AG04449 (cell line): ENCODE measurements at regions of chr15 and their contacts with region 1.

Region 1: GRCh38 chr15:34708422-34708821 is 46.4 kb downstream of the GJD2 start:
- DNase-seq: no peak
- H3K4me3 ChIP-seq: no peak overlapping the region
- CTCF ChIP-seq: peak; percentile 77

Region 2: DNA sequence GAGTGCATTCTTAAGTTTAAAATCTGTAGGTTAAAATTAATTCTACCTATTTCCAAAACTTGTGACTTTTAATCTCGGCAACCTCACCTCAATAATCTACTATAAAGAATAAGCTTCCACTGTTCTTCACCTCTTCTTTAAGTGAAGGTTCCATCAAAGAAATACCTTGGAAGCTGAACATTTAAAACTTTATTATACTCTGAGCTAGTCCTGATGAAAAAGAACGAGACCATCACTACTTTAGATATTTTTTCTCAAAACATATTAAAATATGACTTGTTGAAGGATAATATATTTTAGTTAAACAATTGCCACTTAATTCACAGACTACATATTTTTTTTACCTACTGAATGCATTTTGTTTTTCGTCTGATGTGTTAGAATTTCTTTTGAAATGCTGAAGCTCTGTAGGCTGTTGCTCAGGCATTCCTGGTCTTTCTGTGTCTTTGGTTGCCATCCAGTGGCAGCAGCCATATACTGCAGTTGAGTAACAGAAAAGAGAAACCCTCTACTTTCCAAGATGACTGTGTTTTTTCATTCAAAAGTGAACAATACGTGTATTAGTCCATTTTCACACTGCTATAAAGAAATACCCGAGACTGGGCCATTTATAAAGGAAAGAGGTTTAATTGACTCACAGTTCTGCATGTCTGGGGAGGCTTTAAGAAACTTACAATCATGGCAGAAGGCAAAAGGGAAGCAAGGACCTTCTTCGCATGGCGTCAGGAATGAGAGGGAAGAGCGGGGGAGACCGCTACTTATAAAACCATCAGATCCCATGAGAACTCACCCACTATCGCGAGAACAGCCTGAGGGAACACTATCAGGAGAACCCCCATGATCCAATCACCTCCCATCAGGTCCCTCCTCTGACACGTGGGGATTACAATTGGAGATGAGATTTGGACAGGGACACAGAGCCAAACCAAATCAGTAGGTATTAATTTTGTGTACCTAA is 120.4 kb before region 1 on chr15:
- CTCF ChIA-PET with region 1: no interaction called
- POLR2A ChIA-PET with region 1: no interaction called
- DNase-seq: peak; percentile 33
- H3K4me3 ChIP-seq: peak overlapping the region; percentile 42
- CTCF ChIP-seq: peak; percentile 71

Region 3: DNA sequence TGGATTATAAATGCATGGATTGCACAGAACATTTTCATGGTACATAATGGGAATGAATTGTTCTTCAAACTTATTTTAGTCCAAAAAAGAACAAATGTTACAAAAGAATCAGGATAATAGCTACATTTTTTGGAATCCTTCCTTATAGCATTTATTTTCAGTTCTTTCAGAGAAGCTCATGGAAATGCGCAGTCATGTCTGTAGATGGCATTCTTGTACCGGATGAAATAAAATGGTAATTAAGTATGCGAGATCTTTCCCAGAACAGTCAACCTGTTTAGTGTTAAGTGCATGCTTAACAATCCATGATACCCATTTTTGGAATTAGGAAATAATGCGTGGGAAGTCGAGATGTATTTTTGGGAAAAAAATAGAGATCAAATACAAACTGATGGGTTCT is 86.7 kb before region 1 on chr15:
- CTCF ChIA-PET with region 1: interaction called, 23 read pairs
- POLR2A ChIA-PET with region 1: no interaction called
- DNase-seq: no peak
- H3K4me3 ChIP-seq: no peak overlapping the region
- CTCF ChIP-seq: peak; percentile 28

Region 4: DNA sequence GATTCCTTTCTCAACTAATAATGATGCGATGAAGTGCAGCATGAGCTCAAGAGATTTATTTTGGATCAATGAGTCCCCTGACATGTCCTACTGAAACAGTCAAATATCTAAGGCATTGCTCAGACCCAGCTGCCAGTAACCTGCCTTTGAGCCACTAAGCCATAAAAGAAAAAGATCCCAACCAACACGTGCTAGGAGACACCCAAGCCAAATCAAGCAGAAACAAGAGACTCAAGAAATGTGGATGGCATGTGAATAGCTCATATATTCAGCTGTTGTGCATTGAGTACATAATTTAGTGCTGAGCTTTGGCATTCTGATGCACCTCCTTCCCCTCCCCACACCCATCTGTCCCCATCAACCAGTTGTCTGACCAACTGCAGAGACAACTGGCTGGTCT is 17.1 kb after region 1 on chr15:
- CTCF ChIA-PET with region 1: interaction called, 14 read pairs
- POLR2A ChIA-PET with region 1: no interaction called
- DNase-seq: no peak
- H3K4me3 ChIP-seq: no peak overlapping the region
- CTCF ChIP-seq: no peak

Region 5: GRCh38 chr15:34837246-34838016 is 129.0 kb after region 1 on chr15:
- CTCF ChIA-PET with region 1: interaction called, 11 read pairs
- POLR2A ChIA-PET with region 1: interaction called, 4 read pairs
- DNase-seq: no peak
- H3K4me3 ChIP-seq: no peak overlapping the region
- CTCF ChIP-seq: no peak

Region 6: DNA sequence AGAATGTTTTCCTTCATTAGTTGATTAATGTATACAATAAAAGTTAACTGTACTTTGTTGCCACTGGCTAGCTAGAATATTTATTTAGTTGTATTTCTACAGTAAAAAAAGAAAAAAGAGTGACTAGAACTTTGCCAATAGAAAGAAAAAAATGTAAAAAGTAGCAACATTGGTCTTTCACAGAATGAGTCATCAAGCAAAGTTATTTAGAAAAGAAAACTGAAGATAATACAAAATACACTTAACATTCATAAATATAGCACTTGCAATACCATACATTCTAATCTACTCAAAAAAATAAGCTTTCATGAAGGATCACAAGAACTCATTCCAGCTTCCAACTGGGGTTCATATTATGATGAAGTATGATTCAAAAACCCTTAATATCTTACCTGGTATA is 177.7 kb after region 1 on chr15:
- CTCF ChIA-PET with region 1: interaction called, 10 read pairs
- POLR2A ChIA-PET with region 1: no interaction called
- DNase-seq: no peak
- H3K4me3 ChIP-seq: no peak overlapping the region
- CTCF ChIP-seq: no peak

Region 7: DNA sequence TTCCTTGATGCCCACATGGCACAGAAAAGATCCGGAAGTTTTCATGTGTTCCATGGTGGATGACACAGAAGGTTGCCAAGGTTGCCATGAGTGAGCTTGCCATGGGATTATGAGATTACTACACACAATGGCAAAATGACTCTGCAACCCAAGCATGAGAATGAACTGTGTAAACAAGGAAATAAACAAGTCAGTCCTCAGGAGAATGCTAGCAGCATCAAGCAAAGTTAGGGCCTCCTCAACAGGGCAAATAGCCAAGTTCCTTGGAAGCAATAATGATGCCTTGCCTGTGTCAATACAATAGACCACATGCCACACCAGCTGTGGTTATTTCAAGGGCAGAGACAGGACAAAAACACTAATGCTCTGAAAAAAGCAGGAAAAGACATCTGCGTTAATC is 219.3 kb after region 1 on chr15:
- CTCF ChIA-PET with region 1: interaction called, 156 read pairs
- POLR2A ChIA-PET with region 1: no interaction called
- DNase-seq: no peak
- H3K4me3 ChIP-seq: no peak overlapping the region
- CTCF ChIP-seq: no peak